ENCODE measurements at regions of chr15 and their contacts with region 1.

Region 1: GRCh38 chr15:98202256-98202655 is 241.8 kb downstream of the ARRDC4 start:
- DNase-seq: no peak
- ATAC-seq: no peak

Region 2: GRCh38 chr15:98268163-98268562 is 65.9 kb after region 1 on chr15:
- intact Hi-C with region 1: loop called in 1 of 2 experiments (anchors 10 kb)
- DNase-seq: no peak
- ATAC-seq: no peak

Measured in left cardiac atrium (tissue), 4 donors.